Right lobe of liver (tissue), 6 donors: ENCODE measurements at regions of chr17 and their contacts with region 1.

Region 1: DNA sequence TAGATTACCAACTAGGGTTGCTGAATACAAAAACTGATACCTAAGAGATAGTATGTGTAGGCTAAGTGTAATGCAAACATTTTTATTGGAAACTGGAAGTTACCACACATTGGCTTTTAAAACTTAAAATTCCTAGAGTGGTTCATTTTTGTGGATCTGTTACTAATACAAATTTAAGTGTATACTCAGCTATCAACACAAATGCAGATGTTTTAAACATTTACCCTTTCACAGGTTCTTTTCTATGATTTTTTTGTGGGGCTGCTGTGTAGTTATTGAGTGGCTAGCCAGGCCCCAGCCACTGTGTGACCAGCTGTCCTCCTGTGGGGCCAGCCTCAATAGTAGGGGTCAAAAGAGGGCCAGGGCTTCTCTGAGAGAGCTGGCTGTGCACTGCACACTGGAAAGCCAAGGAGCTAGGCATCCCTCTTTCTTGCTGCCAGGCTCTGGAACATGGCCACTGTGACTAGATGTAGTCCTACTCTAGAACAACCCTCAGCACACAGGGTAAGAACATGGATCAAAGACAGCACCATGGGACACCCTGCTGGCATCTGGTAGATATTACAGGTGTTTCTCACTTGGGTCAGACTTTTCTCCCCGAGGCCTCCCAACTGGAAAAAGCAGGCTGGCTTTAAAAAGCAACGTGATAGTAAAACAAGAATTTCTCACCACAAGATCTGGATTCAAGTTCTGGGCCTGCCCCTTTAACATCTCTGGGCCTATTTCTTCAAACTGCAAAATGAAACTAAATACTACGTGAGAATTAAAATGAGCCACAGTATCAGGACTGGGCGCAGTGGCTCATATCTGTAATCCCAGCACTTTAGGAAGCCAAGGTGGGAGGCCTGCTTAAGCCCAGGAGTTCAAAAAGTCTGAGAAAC is 7.3 kb upstream of the VEZF1 start:
- DNase-seq: peak in 1 of 3 donors; percentile 58
- ATAC-seq: peak; percentile 88 to 96 (median 92)
- H3K4me3 ChIP-seq: no peak overlapping the region
- H3K27ac ChIP-seq: no peak overlapping the region
- H3K4me1 ChIP-seq: peaks cover 0 to 7% (median 0%) of the 10 kb centered on the region in 4 donors
- H3K27me3 ChIP-seq: no peaks in the 10 kb centered on the region
- CTCF ChIP-seq: peak; percentile 55 to 63 (median 62)
- POLR2A ChIP-seq: no peak

Region 2: GRCh38 chr17:57855391-57856035 is 139.8 kb before region 1 on chr17:
- intact Hi-C with region 1: loop called (anchors 5 to 10 kb)
- DNase-seq: peak in 1 of 3 donors; percentile 64
- ATAC-seq: peak in 1 of 4 donors; percentile 39
- H3K4me3 ChIP-seq: no peak overlapping the region
- H3K27ac ChIP-seq: no peak overlapping the region
- H3K4me1 ChIP-seq: no peaks in the 10 kb centered on the region
- H3K27me3 ChIP-seq: no peaks in the 10 kb centered on the region
- CTCF ChIP-seq: no peak
- POLR2A ChIP-seq: no peak

Region 3: GRCh38 chr17:57868007-57868909 is 127.1 kb before region 1 on chr17:
- intact Hi-C with region 1: loop called in 1 of 2 experiments (anchors 10 kb)
- DNase-seq: no peak
- ATAC-seq: peak in 3 of 4 donors; percentile 40 to 70 (median 51)
- H3K4me3 ChIP-seq: no peak overlapping the region
- H3K27ac ChIP-seq: no peak overlapping the region
- H3K4me1 ChIP-seq: no peaks in the 10 kb centered on the region
- H3K27me3 ChIP-seq: no peaks in the 10 kb centered on the region
- CTCF ChIP-seq: no peak
- POLR2A ChIP-seq: no peak